ENCODE measurements at regions of chr2 and their contacts with region 1.

Region 1: GRCh38 chr2:28665041-28665704 is 86.5 kb upstream of the PPP1CB start:
- DNase-seq: no peak

Region 2: DNA sequence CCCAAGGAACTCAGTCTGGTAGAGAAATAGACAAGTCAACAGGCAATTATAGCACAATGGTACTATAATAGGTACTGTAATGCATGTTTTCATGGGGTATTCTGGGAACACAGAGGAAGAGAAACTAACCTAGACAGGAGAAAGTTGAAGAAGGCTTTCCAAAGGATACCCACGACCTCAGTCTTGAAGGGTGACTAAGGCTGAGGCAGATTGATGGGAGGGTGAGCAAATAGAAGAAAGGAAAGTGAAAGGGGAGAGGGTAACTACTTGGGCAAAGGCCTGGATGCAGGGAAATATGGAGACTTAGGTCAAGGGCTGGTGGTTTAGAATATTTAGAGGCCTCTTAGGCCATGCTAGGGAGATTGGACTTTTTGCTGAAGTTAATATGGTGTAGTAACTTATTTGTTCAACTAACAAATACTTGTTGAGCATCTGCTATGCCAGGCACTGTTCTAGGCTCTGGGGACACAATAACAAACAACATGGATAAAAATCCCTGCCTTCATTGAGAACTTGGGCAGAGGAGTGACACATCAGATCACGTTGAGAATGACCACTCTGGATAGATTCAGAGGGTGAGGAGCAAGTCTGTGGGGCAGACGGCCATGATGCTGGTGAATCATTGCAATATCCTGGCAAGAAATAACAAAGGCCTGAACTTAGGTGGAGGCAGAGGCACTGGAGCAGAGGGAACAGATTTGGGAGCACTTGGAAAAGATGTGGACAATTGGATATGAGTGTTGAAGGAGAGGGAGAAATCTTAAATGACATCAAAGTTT is 112.9 kb before region 1 on chr2:
- in situ Hi-C with region 1: no loop called
- DNase-seq: no peak

Region 3: DNA sequence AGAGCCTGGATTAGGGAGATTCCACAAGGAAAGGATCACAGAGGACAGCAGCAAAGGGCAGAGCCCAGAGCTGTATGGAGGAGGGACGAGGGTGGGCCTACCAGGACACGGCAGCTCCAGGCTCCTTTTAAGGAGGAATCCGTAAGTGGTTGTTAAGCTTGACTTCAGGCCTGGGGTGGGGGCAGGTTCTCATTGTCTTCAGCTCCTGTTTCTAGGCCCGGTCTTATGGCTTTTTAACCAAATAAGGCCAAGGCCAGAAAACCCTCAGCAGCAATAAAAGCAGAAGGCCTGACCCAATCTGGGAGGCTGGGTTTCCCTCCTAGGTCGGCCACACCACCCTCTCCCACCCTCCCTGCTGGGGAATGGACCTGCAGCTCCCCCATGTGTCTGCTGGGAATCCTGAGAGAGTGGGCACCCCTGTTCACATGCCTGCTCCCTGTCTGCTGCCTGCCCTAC is 58.2 kb before region 1 on chr2:
- in situ Hi-C with region 1: loop called (anchors 5 kb)
- DNase-seq: peak; percentile 30

Region 4: GRCh38 chr2:28702415-28702861 is 37.3 kb after region 1 on chr2:
- in situ Hi-C with region 1: no loop called
- DNase-seq: peak; percentile 34

Region 5: DNA sequence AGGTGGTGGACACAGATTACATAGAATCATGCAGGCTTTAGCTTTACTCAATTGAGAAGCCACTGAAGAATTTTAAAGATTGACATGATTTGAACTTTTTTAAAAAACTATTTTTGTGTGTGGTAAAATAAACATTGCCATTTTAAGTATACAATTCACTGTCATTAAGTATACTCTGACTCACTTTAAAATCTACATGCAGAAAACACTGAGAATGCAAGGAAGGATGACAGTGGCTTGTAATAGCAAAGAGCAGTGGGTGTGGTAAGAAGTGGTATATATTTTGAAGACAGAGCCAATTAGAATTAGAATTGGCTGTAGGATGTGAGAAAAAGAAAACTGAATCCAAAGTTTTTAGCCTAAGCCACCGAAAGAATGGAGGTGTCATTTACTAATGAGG is 190.0 kb after region 1 on chr2:
- in situ Hi-C with region 1: no loop called
- DNase-seq: no peak

Measured in G401 (cell line).